ENCODE measurements at regions of chr20 and their contacts with region 1.

Region 1: GRCh38 chr20:34190679-34191090 is 50.5 kb upstream of the ASIP start:
- DNase-seq: peak; percentile 82
- ATAC-seq: peak; percentile 99
- H3K4me3 Mint-ChIP-seq: no peak overlapping the region
- H3K27ac Mint-ChIP-seq: no peak overlapping the region
- H3K4me1 Mint-ChIP-seq: peaks cover 22% of the 10 kb centered on the region
- H3K27me3 Mint-ChIP-seq: no peaks in the 10 kb centered on the region
- CTCF ChIP-seq: peak; percentile 49; the same call in 1 of the 2 replicates

Region 2: GRCh38 chr20:34180460-34181120 is 10.1 kb before region 1 on chr20:
- CTCF ChIA-PET with region 1: interaction called, 23 read pairs
- POLR2A ChIA-PET with region 1: no interaction called
- DNase-seq: no peak
- ATAC-seq: no peak
- H3K4me3 Mint-ChIP-seq: no peak overlapping the region
- H3K27ac Mint-ChIP-seq: no peak overlapping the region
- H3K4me1 Mint-ChIP-seq: peaks cover 15% of the 10 kb centered on the region
- H3K27me3 Mint-ChIP-seq: no peaks in the 10 kb centered on the region
- CTCF ChIP-seq: no peak

Region 3: DNA sequence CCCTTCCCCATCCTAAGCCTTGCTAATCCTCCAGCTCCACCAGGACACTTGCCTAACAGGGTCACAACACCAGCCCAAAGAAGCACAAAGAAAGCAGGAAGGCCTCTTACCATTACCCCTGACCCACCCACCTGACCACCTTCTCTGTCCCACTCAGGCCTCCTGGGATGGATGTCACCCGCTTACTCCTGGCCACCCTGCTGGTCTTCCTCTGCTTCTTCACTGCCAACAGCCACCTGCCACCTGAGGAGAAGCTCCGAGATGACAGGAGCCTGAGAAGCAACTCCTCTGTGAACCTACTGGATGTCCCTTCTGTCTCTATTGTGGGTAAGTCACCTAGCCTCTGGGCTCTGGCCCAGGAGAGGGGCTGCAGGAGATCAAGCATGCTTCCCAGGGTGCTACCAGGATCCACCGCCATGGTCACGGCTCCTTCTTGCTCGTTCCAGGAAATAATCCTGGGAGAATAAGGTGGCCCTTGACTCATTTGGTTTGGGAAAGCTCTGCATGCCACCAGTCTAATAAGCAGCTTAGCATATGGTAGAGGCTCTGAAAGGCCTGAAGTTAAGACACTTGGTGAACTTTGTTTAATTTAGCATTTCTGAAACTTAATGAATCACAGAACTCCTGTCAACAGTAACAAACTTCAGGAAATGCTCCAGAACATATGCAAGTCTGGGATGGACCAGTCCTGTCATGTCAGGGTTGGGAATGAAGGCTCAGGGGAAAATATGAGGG is 69.7 kb after region 1 on chr20:
- CTCF ChIA-PET with region 1: interaction called, 56 read pairs
- POLR2A ChIA-PET with region 1: no interaction called
- DNase-seq: no peak
- ATAC-seq: no peak
- H3K4me3 Mint-ChIP-seq: no peak overlapping the region
- H3K27ac Mint-ChIP-seq: peak overlapping the region; percentile 89
- H3K4me1 Mint-ChIP-seq: peaks cover 14% of the 10 kb centered on the region
- H3K27me3 Mint-ChIP-seq: no peaks in the 10 kb centered on the region
- CTCF ChIP-seq: no peak

Region 4: DNA sequence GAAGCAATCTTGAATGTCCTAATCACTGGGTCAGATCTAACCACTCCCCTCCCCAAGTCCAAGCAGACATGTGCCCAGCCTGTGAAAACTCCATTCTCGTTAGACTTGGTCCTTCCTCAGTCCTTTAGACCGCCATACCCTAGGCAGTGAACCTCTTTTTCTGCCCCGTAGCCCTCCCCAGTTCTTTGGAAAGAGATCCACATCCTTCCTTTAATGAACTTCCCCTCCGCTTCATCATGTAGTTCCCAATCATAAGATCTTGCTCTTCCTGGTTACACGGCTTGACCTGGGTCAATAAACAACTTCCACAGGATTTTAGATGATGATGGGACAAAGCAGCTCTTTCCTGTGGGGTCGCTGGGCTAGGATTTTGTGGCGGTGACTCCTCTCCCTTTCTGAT is 102.9 kb after region 1 on chr20:
- CTCF ChIA-PET with region 1: interaction called, 13 read pairs
- POLR2A ChIA-PET with region 1: no interaction called
- DNase-seq: no peak
- ATAC-seq: no peak
- H3K4me3 Mint-ChIP-seq: no peak overlapping the region
- H3K27ac Mint-ChIP-seq: no peak overlapping the region; the same call in 1 of the 2 replicates
- H3K4me1 Mint-ChIP-seq: peaks cover 2% of the 10 kb centered on the region; the same call in 1 of the 2 replicates
- H3K27me3 Mint-ChIP-seq: no peaks in the 10 kb centered on the region
- CTCF ChIP-seq: no peak

Region 5: GRCh38 chr20:34538671-34539123 is 348.0 kb after region 1 on chr20:
- CTCF ChIA-PET with region 1: interaction called, 14 read pairs
- POLR2A ChIA-PET with region 1: no interaction called
- DNase-seq: peak; percentile 72
- ATAC-seq: peak; percentile 70
- H3K4me3 Mint-ChIP-seq: no peak overlapping the region
- H3K27ac Mint-ChIP-seq: peak overlapping the region; percentile 49; the same call in 1 of the 2 replicates
- H3K4me1 Mint-ChIP-seq: peaks cover under 1% of the 10 kb centered on the region; the same call in 1 of the 2 replicates
- H3K27me3 Mint-ChIP-seq: no peaks in the 10 kb centered on the region
- CTCF ChIP-seq: peak; percentile 60

Region 6: DNA sequence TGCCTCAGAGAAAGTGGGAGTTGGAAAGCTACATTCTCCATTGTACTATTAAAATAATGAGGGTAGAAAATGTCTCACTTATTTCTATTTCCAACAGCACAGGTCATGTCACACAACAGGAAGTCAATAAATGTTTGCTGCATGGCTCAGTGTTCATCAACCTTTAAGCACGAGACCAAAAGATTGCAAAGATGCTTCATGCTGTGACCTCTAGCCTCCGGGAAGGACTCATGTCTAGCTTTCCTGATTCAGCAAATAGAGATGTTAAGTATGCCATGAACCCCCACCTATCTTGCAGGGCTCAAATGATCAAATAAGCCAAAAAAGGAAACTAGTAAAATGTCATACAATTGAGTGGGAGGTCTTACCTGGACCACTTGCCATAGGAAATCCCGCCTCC is 577.4 kb after region 1 on chr20:
- CTCF ChIA-PET with region 1: interaction called, 14 read pairs
- POLR2A ChIA-PET with region 1: no interaction called
- DNase-seq: no peak
- ATAC-seq: no peak
- H3K4me3 Mint-ChIP-seq: no peak overlapping the region
- H3K27ac Mint-ChIP-seq: no peak overlapping the region
- H3K4me1 Mint-ChIP-seq: no peaks in the 10 kb centered on the region
- H3K27me3 Mint-ChIP-seq: no peaks in the 10 kb centered on the region
- CTCF ChIP-seq: no peak